Caco-2 (cell line): ENCODE measurements at regions of chr5 and their contacts with region 1.

Region 1: GRCh38 chr5:149762958-149763630 is 33.0 kb downstream of the PPARGC1B start:
- DNase-seq: no peak
- H3K4me3 ChIP-seq: no peak overlapping the region
- H3K4me3 Mint-ChIP-seq: no peak overlapping the region
- H3K27ac Mint-ChIP-seq: no peak overlapping the region
- H3K4me1 ChIP-seq: peaks cover 23% of the 10 kb centered on the region
- H3K4me1 Mint-ChIP-seq: peaks cover 14% of the 10 kb centered on the region
- H3K27me3 ChIP-seq: no peaks in the 10 kb centered on the region
- H3K27me3 Mint-ChIP-seq: no peaks in the 10 kb centered on the region
- CTCF ChIP-seq: no peak

Region 2: DNA sequence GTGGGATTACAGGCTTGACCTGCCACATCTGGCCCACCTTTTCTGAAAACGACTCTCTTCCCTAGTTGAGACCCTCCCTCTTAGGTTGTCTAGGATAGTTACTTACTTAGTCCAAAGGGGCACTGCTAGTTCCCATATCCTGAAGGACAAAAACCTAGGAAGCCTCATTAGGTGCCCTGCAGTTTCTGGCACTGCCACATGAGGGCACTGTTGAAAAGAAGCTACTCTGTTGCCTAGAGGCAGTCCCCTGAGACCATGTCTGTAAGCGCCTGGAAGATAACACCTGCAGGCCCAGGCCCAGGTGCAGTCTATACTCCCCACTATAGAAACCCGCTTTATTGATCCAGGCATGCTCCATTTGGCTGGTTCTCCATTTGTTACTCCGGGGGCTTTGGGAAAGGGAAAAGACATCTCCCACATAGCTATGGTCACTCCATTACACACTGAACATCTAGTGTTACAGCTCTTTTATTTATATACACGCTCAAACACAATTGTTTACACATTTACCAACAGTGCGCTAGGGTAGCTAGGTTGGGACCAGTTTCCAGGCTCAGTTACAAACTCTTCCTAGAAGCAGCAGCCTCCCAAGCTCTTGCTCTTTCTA is 106.4 kb before region 1 on chr5:
- CTCF ChIA-PET with region 1: no interaction called
- POLR2A ChIA-PET with region 1: no interaction called
- intact Hi-C with region 1: no loop called
- DNase-seq: peak; percentile 67 to 71
- H3K4me3 ChIP-seq: no peak overlapping the region
- H3K4me3 Mint-ChIP-seq: no peak overlapping the region
- H3K27ac Mint-ChIP-seq: no peak overlapping the region
- H3K4me1 ChIP-seq: no peaks in the 10 kb centered on the region
- H3K4me1 Mint-ChIP-seq: no peaks in the 10 kb centered on the region
- H3K27me3 ChIP-seq: no peaks in the 10 kb centered on the region
- H3K27me3 Mint-ChIP-seq: no peaks in the 10 kb centered on the region
- CTCF ChIP-seq: peak; percentile 82 to 85

Region 3: GRCh38 chr5:149979896-149980295 is 216.8 kb after region 1 on chr5:
- CTCF ChIA-PET with region 1: no interaction called
- POLR2A ChIA-PET with region 1: interaction called, 10 read pairs
- intact Hi-C with region 1: no loop called
- DNase-seq: no peak
- H3K4me3 ChIP-seq: no peak overlapping the region
- H3K4me3 Mint-ChIP-seq: no peak overlapping the region
- H3K27ac Mint-ChIP-seq: no peak overlapping the region
- H3K4me1 ChIP-seq: peaks cover 45% of the 10 kb centered on the region
- H3K4me1 Mint-ChIP-seq: peaks cover 43% of the 10 kb centered on the region
- H3K27me3 ChIP-seq: no peaks in the 10 kb centered on the region
- H3K27me3 Mint-ChIP-seq: no peaks in the 10 kb centered on the region
- CTCF ChIP-seq: no peak